ENCODE measurements at regions of chr6 and their contacts with region 1.

Region 1: GRCh38 chr6:44096612-44097011 is 30.6 kb downstream of the MRPL14 start:
- DNase-seq: peak in 1 of 2 donors; percentile 79
- H3K4me3 ChIP-seq: no peak overlapping the region
- H3K27ac ChIP-seq: no peak overlapping the region
- H3K4me1 ChIP-seq: no peaks in the 10 kb centered on the region
- H3K27me3 ChIP-seq: no peaks in the 10 kb centered on the region
- CTCF ChIP-seq: peak; percentile 79 to 88 (median 84)

Region 2: GRCh38 chr6:44111434-44112417 is 15.1 kb after region 1 on chr6:
- intact Hi-C with region 1: no loop called
- DNase-seq: no peak
- H3K4me3 ChIP-seq: no peak overlapping the region
- H3K27ac ChIP-seq: peak overlapping the region in 1 of 2 donors; percentile 71
- H3K4me1 ChIP-seq: peaks cover 7 to 9% of the 10 kb centered on the region in 2 donors
- H3K27me3 ChIP-seq: no peaks in the 10 kb centered on the region
- CTCF ChIP-seq: no peak

Region 3: DNA sequence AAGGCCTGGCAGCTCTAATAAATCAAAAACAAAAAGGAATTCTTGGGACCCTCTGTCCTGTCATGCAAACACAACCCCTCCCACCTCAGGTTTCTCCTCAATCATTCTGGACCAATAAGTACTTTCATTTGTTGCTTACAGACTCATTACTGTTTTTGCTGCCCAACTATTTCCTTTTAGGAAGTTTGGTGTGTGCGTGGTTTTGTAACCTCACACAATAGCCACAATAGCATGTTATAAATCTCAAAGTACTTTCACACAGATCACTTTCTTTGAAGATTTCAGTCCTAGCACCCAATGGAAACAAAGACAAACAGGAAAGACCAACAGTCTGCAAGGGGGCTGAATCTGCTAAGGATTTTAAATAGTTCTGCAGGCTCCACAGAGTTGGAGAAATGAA is 26.2 kb after region 1 on chr6:
- intact Hi-C with region 1: no loop called
- DNase-seq: no peak
- H3K4me3 ChIP-seq: no peak overlapping the region
- H3K27ac ChIP-seq: peak overlapping the region in 1 of 2 donors; percentile 52
- H3K4me1 ChIP-seq: peaks cover 3 to 37% of the 10 kb centered on the region in 2 donors
- H3K27me3 ChIP-seq: no peaks in the 10 kb centered on the region
- CTCF ChIP-seq: no peak

Region 4: GRCh38 chr6:44133003-44133931 is 36.7 kb after region 1 on chr6:
- intact Hi-C with region 1: loop called (anchors 5 kb)
- DNase-seq: peak in 1 of 2 donors; percentile 70
- H3K4me3 ChIP-seq: no peak overlapping the region
- H3K27ac ChIP-seq: no peak overlapping the region
- H3K4me1 ChIP-seq: peaks cover 0 to 5% of the 10 kb centered on the region in 2 donors
- H3K27me3 ChIP-seq: no peaks in the 10 kb centered on the region
- CTCF ChIP-seq: no peak

Region 5: DNA sequence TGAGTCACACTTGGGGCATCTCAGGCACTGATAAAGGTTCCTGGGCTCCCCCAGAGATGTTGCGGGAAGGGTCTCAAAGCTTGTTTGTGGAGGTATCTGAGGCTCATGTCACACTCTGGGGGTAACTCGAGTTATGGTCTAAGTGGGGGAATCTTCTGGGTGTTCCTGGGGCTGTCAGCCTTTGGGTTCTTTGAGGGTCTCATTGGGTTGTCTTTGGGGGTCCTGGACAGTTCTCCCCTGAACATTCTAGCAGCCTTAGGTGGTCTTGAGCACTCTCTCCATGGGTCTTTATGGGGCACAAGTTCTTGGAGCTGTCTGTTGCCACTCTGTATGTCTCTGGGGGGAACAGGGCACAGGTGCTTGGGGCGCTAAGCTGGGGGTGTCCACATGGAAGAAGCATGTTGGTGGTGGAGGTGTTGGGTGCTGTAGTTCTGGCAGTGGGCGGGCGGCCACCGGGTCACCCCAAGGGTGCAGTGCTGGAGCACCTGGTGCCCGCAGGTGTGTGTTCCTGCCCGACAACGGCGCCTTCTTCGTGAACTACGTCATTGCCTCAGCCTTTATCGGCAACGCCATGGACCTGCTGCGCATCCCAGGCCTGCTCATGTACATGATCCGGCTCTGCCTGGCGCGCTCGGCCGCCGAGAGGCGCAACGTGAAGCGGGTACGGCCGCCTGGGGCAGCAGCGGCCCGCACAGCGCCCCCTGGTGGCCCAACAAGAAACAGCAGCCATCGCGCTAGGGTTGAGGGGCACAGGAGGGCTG is 54.9 kb after region 1 on chr6:
- intact Hi-C with region 1: loop called (anchors 1 kb)
- DNase-seq: peak in 1 of 2 donors; percentile 81
- H3K4me3 ChIP-seq: peak overlapping the region in 1 of 2 donors; percentile 15
- H3K27ac ChIP-seq: no peak overlapping the region
- H3K4me1 ChIP-seq: peaks cover 0 to 3% of the 10 kb centered on the region in 2 donors
- H3K27me3 ChIP-seq: no peaks in the 10 kb centered on the region
- CTCF ChIP-seq: peak; percentile 98 to 99 (median 99)

Region 6: GRCh38 chr6:44312901-44313788 is 216.5 kb after region 1 on chr6 and contains the start of gene AARS2:
- intact Hi-C with region 1: loop called (anchors 10 kb)
- DNase-seq: peak; percentile 35 to 91
- H3K4me3 ChIP-seq: peak within 1 kb of the TSS; percentile 90 to 99
- H3K27ac ChIP-seq: peak within 1 kb of the TSS; percentile 52 to 76
- H3K4me1 ChIP-seq: peaks cover 0 to 5% of the 10 kb centered on the region in 2 donors
- H3K27me3 ChIP-seq: no peaks in the 10 kb centered on the region
- CTCF ChIP-seq: peak; percentile 92 to 98 (median 97)
- total RNA-seq, gene AARS2: 4.5 TPM

Region 7: GRCh38 chr6:44338228-44339122 is 241.9 kb after region 1 on chr6:
- intact Hi-C with region 1: loop called (anchors 1 kb)
- DNase-seq: peak in 1 of 2 donors; percentile 76
- H3K4me3 ChIP-seq: no peak overlapping the region
- H3K27ac ChIP-seq: no peak overlapping the region
- H3K4me1 ChIP-seq: no peaks in the 10 kb centered on the region
- H3K27me3 ChIP-seq: peaks cover 3% of the 10 kb centered on the region
- CTCF ChIP-seq: peak; percentile 50 to 67 (median 55)

Measured in ascending aorta (tissue), 2 donors.